GM12878 (cell line): ENCODE measurements at regions of chr5 and their contacts with region 1.

Region 1: DNA sequence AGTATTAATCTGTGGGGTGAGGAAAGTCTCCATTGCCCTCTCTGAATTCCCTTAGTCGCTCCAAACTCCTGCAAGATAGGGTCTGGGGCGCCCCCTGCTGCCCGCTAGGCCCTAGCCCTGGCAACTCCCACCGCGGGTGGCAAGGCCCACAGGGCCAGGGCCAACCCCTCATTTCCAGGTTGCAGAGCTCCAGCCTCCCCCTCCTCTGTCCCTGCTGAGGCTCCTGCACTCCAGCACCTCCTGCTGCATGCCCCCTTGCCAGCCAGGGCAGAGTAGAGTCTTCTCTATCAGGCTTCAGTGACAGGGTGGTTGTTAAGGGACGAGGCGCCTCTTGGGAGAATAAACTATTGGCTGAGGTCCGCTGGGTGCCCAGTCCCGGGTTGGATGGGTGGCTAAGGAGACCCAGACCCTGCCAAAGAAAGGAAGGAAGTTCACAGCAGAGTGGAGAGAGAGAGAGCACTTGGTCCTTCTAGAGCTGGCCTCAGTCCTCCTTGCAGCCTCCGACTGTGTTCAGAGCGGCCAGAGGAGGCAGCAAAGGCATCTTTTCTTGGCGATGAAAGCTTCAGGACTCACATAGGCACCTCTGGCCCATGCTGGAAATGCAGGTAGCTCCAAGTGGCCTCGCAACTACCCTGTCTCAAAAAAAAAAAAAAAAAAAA is 45.6 kb downstream of the SAR1B start:
- DNase-seq: peak; percentile 45
- ATAC-seq: peak; percentile 96
- H3K4me3 ChIP-seq: no peak overlapping the region
- H3K27ac ChIP-seq: no peak overlapping the region
- H3K4me1 ChIP-seq: peaks cover 6% of the 10 kb centered on the region
- H3K27me3 ChIP-seq: no peaks in the 10 kb centered on the region
- CTCF ChIP-seq: peak; percentile 81 to 88 (median 87)
- EP300 ChIP-seq: no peak
- POLR2A ChIP-seq: no peak
- RAD21 ChIP-seq: peak; percentile 90

Region 2: GRCh38 chr5:134184155-134185135 is 402.6 kb before region 1 on chr5:
- CTCF ChIA-PET with region 1: interaction called, 7 read pairs
- POLR2A ChIA-PET with region 1: no interaction called
- RAD21 ChIA-PET with region 1: no interaction called
- SMC1A ChIA-PET with region 1: interaction called, 8 read pairs
- in situ Hi-C with region 1: loop called (anchors 5 kb)
- intact Hi-C with region 1: loop called (anchors 2 kb)
- DNase-seq: peak; percentile 16
- ATAC-seq: peak; percentile 99
- H3K4me3 ChIP-seq: no peak overlapping the region
- H3K27ac ChIP-seq: no peak overlapping the region
- H3K4me1 ChIP-seq: no peaks in the 10 kb centered on the region
- H3K27me3 ChIP-seq: no peaks in the 10 kb centered on the region
- CTCF ChIP-seq: peak; percentile 87 to 97 (median 89)
- EP300 ChIP-seq: no peak
- POLR2A ChIP-seq: no peak
- RAD21 ChIP-seq: peak; percentile 92

Region 3: DNA sequence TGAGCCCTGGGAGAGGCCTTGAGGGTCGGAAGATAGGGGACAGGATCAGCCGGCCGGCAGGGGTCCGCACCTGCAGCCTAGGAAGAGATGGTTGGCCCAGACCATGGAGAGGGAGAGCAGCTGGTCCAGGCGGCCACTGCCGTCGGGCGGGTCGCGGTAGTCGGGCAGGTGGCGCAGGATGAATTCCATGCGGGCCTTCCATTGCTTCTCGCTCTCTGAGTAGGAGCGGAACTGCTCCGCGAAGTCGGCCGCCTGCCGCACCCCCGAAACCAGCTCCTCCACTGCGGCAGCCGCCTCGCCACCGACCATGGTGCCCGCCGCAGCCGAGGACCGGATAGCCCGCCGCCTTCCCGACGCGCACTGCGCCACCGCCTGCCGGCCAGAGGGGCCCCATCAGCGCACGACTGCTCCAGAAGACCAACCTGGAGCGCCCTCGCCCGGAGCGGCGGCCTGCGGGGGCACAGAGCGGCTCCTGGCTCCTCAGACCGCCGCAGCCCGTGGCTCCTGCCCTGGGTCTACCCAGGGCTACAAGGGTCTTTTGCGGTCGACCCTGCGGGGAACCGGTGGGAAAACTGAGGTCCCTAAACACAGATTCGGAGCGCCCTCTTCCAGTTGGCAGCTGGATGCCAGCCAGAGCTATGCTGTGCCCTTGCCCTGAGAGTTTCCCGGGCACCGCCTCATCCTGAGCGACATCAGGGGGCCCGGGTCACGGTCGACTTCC is 175.3 kb before region 1 on chr5 and contains the start of gene CDKN2AIPNL:
- CTCF ChIA-PET with region 1: interaction called, 12 read pairs
- POLR2A ChIA-PET with region 1: no interaction called
- RAD21 ChIA-PET with region 1: interaction called, 15 read pairs
- SMC1A ChIA-PET with region 1: interaction called, 10 read pairs
- in situ Hi-C with region 1: no loop called
- intact Hi-C with region 1: loop called (anchors 2 kb)
- DNase-seq: peak; percentile 34
- ATAC-seq: peak; percentile 99
- H3K4me3 ChIP-seq: peak within 1 kb of the TSS; percentile 85
- H3K27ac ChIP-seq: peak within 1 kb of the TSS; percentile 69
- H3K4me1 ChIP-seq: peaks cover 4% of the 10 kb centered on the region; the same call in 1 of the 2 replicates
- H3K27me3 ChIP-seq: no peaks in the 10 kb centered on the region
- CTCF ChIP-seq: peak; percentile 76 to 88 (median 81)
- EP300 ChIP-seq: peak in 1 of 2 experiments; percentile 46; a peak in 1 of 4 replicates
- POLR2A ChIP-seq: peak; percentile 94
- RAD21 ChIP-seq: peak; percentile 66
- polyA plus RNA-seq, gene CDKN2AIPNL: 23.5 to 29.9 TPM

Region 4: DNA sequence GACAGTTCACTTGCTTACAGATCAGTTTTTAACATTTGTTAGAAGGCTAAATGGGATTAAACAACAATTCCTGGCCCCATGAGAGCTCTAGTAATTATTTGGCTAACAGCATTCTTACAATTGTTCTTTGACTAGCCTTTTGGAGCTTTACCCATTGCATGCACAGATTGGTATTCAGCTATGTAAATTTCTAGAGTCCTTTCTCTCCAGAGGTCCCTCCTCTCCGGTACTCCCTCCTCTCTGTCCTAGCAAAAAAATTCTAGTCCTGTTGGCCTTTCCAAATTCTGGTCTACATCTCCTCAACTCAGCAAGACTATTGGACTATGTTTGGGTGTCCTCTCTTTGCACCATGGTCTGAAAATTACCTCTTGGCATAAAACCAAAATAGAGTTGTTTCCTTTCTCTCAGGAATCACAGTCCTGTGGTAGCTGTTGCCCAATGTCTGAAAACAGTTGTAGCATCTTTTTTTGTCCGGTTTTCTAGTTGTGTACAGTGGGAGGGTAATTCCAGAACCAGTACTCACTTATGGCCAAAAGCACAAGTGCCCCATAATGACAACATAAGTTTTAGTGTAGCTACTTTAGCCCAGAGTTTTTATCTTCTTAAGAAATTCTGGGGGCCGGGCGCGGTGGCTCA is 27.6 kb after region 1 on chr5:
- CTCF ChIA-PET with region 1: interaction called, 38 read pairs
- POLR2A ChIA-PET with region 1: interaction called, 3 read pairs
- RAD21 ChIA-PET with region 1: interaction called, 26 read pairs
- SMC1A ChIA-PET with region 1: interaction called, 22 read pairs
- in situ Hi-C with region 1: no loop called
- intact Hi-C with region 1: no loop called
- DNase-seq: no peak
- ATAC-seq: no peak
- H3K4me3 ChIP-seq: no peak overlapping the region
- H3K27ac ChIP-seq: no peak overlapping the region
- H3K4me1 ChIP-seq: peaks cover 2% of the 10 kb centered on the region
- H3K27me3 ChIP-seq: no peaks in the 10 kb centered on the region
- CTCF ChIP-seq: no peak
- EP300 ChIP-seq: no peak
- POLR2A ChIP-seq: no peak
- RAD21 ChIP-seq: no peak

Region 5: DNA sequence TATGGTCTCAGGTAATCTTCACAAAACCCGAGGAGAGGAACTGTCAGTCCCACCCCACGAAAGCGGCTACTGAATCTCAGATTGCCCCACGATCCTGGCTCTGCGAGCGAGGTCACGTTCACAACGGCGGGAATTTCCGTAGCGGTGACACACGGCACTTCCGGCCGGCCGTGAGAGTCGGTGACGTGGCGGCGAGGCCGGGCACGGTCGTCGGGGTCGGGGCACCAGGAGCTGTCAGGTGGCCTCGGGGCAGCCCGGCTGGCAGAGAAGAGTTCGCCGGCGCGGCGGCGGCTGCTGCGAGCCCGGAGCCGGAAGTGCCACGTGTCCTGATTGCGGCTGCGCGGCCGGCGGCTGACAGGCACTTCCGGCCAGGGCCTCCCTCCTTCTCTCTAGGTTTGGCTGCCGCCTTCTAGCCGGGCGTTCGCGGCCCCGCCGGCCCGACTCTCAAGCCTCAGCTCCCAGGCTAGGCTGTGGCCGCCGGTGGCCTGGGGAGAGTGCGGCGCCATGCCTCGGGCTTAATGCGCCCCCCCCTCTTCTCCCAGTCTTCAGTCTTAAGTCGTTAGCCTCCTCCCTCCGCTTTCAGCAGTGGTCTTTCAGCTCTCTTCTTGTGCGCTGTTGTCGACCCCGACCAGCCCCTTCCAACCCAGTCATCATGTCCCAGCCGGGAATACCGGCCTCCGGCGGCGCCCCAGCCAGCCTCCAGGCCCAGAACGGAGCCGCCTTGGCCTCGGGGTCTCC is 61.6 kb after region 1 on chr5 and contains the start of gene SEC24A:
- CTCF ChIA-PET with region 1: interaction called, 13 read pairs
- POLR2A ChIA-PET with region 1: interaction called, 10 read pairs
- RAD21 ChIA-PET with region 1: interaction called, 5 read pairs
- SMC1A ChIA-PET with region 1: interaction called, 7 read pairs
- in situ Hi-C with region 1: no loop called
- intact Hi-C with region 1: loop called (anchors 5 kb)
- DNase-seq: no peak
- ATAC-seq: peak; percentile 89
- H3K4me3 ChIP-seq: peak within 1 kb of the TSS; percentile 100
- H3K27ac ChIP-seq: peak within 1 kb of the TSS; percentile 98
- H3K4me1 ChIP-seq: peaks cover 18% of the 10 kb centered on the region
- H3K27me3 ChIP-seq: no peaks in the 10 kb centered on the region
- CTCF ChIP-seq: no peak
- EP300 ChIP-seq: peak in 1 of 2 experiments; percentile 40; a peak in 1 of 4 replicates
- POLR2A ChIP-seq: peak; percentile 91
- RAD21 ChIP-seq: no peak
- polyA plus RNA-seq, gene SEC24A: 7.1 to 12.5 TPM

Region 6: DNA sequence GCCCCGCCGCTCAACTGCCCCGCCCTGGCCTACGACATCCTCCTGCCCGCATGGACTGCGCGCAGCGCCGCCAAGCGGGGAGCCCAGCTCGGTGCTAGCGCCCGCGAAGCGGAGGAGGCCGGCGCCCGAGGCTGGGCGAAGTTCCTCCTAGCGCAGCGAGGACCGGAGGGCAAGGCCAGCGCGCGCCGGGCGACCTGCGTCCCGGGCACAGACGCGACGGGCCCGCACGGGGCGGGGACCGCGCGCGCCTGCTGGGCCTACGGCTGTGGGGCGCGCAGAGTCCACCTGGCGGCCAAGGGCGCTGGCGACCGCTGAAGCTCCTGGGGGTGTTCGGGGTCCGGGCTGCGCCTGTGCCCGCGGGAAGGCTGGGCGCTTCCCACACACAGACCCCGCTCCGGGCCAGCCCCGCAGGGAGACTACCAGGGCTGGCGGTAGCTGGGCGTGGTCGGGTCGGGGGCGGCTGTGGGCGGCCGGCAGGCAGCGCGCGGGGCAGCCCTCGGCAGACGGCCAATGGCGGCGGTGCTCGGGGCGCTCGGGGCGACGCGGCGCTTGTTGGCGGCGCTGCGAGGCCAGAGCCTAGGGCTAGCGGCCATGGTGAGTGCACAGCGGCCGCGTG is 317.7 kb after region 1 on chr5 and contains the start of gene PCBD2:
- CTCF ChIA-PET with region 1: interaction called, 8 read pairs
- POLR2A ChIA-PET with region 1: no interaction called
- RAD21 ChIA-PET with region 1: interaction called, 3 read pairs
- SMC1A ChIA-PET with region 1: interaction called, 3 read pairs
- in situ Hi-C with region 1: no loop called
- intact Hi-C with region 1: loop called (anchors 10 kb)
- DNase-seq: peak; percentile 73
- ATAC-seq: peak; percentile 88
- H3K4me3 ChIP-seq: peak within 1 kb of the TSS; percentile 83
- H3K27ac ChIP-seq: peak within 1 kb of the TSS; percentile 91
- H3K4me1 ChIP-seq: peaks cover 24% of the 10 kb centered on the region
- H3K27me3 ChIP-seq: no peaks in the 10 kb centered on the region
- CTCF ChIP-seq: peak; percentile 97 to 98 (median 98)
- EP300 ChIP-seq: no peak
- POLR2A ChIP-seq: peak; percentile 82
- RAD21 ChIP-seq: peak; percentile 92
- polyA plus RNA-seq, gene PCBD2: 6.7 to 7.0 TPM